Posterior cingulate gyrus (tissue), 11 donors: ENCODE measurements at regions of chr10 and their contacts with region 1.

Region 1: GRCh38 chr10:72567884-72568640 is 57.8 kb downstream of the MICU1 start:
- DNase-seq: no peak

Region 2: GRCh38 chr10:72375585-72375984 is 192.5 kb before region 1 on chr10:
- intact Hi-C with region 1: loop called (anchors 2 kb)
- DNase-seq: peak in 7 of 10 donors; percentile 34 to 90 (median 44)